Activated CD8-positive, alpha-beta memory T cell treated with anti-CD3 and anti-CD28 coated beads, Interleukin-2, amount 10 ng/mL, durations not matched to agents 7 days and 5 days (primary cell): ENCODE measurements at regions of chr22 and their contacts with region 1.

Region 1: DNA sequence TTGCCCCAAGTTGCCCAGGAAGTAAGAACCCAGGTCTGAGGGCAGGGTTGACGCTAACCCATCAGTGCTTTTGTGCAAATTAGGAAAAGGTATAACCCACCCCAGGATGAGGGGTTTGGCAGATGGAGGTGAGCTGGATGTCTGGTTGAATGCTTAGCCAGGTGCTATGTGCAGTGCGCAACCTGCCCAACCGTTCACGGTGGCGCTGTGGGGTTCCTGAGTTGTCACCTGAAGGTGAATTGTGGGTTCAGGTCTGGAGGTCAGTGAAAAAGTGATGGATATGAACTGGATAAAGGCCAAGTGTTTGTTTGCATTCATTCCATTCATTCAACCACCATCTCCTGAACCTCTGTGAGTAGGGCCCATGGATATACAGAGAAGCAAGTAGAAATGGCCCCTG is 14.3 kb upstream of the LGALS2 start:
- DNase-seq: no peak
- ATAC-seq: no peak
- H3K4me3 Mint-ChIP-seq: no peak overlapping the region
- H3K27ac Mint-ChIP-seq: no peak overlapping the region
- H3K4me1 Mint-ChIP-seq: peaks cover 15% of the 10 kb centered on the region
- H3K27me3 Mint-ChIP-seq: no peaks in the 10 kb centered on the region

Region 2: GRCh38 chr22:37561212-37562048 is 32.8 kb before region 1 on chr22:
- CTCF ChIA-PET with region 1: interaction called, 62 read pairs
- DNase-seq: peak; percentile 87
- ATAC-seq: peak; percentile 52
- H3K4me3 Mint-ChIP-seq: peak overlapping the region; percentile 13
- H3K27ac Mint-ChIP-seq: no peak overlapping the region
- H3K4me1 Mint-ChIP-seq: peaks cover 23% of the 10 kb centered on the region
- H3K27me3 Mint-ChIP-seq: peaks cover 74% of the 10 kb centered on the region

Region 3: DNA sequence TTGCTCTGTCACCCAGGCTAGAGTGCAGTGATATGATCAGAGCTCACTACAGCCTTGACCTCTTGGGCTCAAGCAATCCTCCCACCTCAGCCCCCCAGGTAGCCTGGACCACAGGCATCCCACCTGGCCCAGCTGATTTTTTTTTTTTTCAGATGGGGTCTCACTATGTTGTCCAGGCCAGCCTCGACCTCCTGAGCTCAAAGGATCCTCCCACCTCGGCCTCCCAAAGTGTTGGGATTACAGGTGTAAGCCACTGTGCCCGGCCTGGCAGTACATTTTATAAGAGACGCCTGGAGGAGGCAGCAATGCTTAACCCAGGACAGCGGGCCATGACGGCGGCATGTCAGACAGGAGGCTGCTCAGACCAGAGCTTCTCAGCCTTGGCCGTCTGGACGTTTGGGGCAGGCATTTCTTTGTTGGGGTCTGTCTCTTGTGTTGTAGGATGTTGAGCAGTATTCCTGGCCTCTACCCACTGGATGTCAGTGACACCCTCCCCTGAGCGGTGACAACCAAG is 18.7 kb before region 1 on chr22:
- CTCF ChIA-PET with region 1: interaction called, 28 read pairs
- DNase-seq: no peak
- ATAC-seq: no peak
- H3K4me3 Mint-ChIP-seq: no peak overlapping the region
- H3K27ac Mint-ChIP-seq: no peak overlapping the region
- H3K4me1 Mint-ChIP-seq: peaks cover 13% of the 10 kb centered on the region
- H3K27me3 Mint-ChIP-seq: peaks cover 19% of the 10 kb centered on the region

Region 4: GRCh38 chr22:37581504-37581903 is 12.7 kb before region 1 on chr22:
- CTCF ChIA-PET with region 1: interaction called, 28 read pairs
- DNase-seq: no peak
- ATAC-seq: no peak
- H3K4me3 Mint-ChIP-seq: no peak overlapping the region
- H3K27ac Mint-ChIP-seq: no peak overlapping the region
- H3K4me1 Mint-ChIP-seq: peaks cover 16% of the 10 kb centered on the region
- H3K27me3 Mint-ChIP-seq: peaks cover 27% of the 10 kb centered on the region